Common myeloid progenitor, CD34-positive (primary cell): ENCODE measurements at regions of chr2 and their contacts with region 1.

Region 1: GRCh38 chr2:162301151-162301804 is 17.2 kb downstream of the IFIH1 start:
- DNase-seq: peak; percentile 66 to 85 (median 84)
- H3K4me3 ChIP-seq: no peak overlapping the region
- H3K27ac ChIP-seq: no peak overlapping the region
- H3K4me1 ChIP-seq: peaks cover 0 to 8% (median 6%) of the 10 kb centered on the region in 4 experiments
- H3K27me3 ChIP-seq: no peaks in the 10 kb centered on the region

Region 2: DNA sequence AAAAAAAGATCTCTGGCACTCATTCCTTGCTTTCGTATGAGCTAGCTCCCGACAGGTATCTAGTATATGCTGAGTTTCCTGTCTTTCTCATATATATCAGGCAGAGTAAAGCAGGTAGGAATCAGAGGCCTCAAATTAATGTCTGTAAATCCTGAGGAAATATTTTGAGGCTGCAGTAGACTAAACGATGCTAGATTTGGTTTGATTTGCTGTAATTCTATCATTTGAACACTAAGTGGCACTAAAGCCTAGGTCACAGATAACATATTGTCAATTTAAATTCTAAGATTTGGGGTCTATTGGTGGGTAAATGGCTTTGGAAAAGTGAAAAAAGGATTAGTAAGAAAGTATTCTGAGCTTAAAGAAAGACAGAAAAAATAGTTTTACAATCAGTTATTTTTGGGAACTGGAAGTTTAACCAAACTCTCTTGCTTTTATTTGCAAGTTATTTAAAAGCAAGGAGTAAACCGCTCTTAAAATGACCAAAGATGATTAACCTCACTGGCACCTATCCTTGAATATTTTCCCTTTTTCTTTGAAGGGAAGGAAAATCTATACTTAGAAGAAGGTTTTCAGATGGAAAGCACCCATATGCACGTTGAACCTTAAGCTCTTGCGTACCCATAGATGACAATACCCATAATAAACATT is 714.6 kb before region 1 on chr2:
- CTCF ChIA-PET with region 1: interaction called, 22 read pairs
- POLR2A ChIA-PET with region 1: no interaction called
- DNase-seq: peak; percentile 18 to 52 (median 39)
- H3K4me3 ChIP-seq: no peak overlapping the region
- H3K27ac ChIP-seq: no peak overlapping the region
- H3K4me1 ChIP-seq: no peaks in the 10 kb centered on the region
- H3K27me3 ChIP-seq: no peaks in the 10 kb centered on the region

Region 3: GRCh38 chr2:162153608-162154224 is 147.6 kb before region 1 on chr2:
- CTCF ChIA-PET with region 1: interaction called, 13 read pairs
- POLR2A ChIA-PET with region 1: no interaction called
- DNase-seq: peak; percentile 67 to 83 (median 77)
- H3K4me3 ChIP-seq: peak overlapping the region in 1 of 7 experiments; percentile 25
- H3K27ac ChIP-seq: no peak overlapping the region
- H3K4me1 ChIP-seq: no peaks in the 10 kb centered on the region
- H3K27me3 ChIP-seq: no peaks in the 10 kb centered on the region

Region 4: DNA sequence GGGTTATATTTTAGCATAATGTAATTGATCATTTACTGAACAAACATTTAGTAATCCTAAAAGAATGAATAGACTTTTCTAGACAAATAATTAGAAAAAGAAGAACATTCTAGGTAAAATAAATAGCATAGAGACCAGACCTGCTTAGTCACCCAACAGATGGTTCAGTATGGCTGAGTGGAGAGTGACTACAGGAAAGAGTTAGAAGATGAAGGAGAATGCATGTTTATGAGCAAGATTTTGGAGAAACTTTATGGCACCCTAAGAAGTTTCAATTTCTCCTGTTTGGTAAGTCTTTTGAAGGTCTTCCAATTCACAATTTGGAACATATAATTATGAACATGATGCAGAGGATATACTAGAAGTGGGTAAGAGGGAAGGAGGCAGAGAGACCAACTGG is 90.9 kb before region 1 on chr2:
- CTCF ChIA-PET with region 1: interaction called, 11 read pairs
- POLR2A ChIA-PET with region 1: no interaction called
- DNase-seq: peak in 2 of 3 donors; percentile 21 to 39
- H3K4me3 ChIP-seq: no peak overlapping the region
- H3K27ac ChIP-seq: no peak overlapping the region
- H3K4me1 ChIP-seq: peaks cover 0 to 12% (median 0%) of the 10 kb centered on the region in 4 experiments
- H3K27me3 ChIP-seq: no peaks in the 10 kb centered on the region

Region 5: GRCh38 chr2:162221064-162221463 is 80.2 kb before region 1 on chr2:
- CTCF ChIA-PET with region 1: interaction called, 112 read pairs
- POLR2A ChIA-PET with region 1: no interaction called
- DNase-seq: peak; percentile 39 to 58 (median 50)
- H3K4me3 ChIP-seq: no peak overlapping the region
- H3K27ac ChIP-seq: no peak overlapping the region
- H3K4me1 ChIP-seq: no peaks in the 10 kb centered on the region
- H3K27me3 ChIP-seq: no peaks in the 10 kb centered on the region

Region 6: GRCh38 chr2:162333968-162334367 is 32.7 kb after region 1 on chr2:
- CTCF ChIA-PET with region 1: interaction called, 26 read pairs
- POLR2A ChIA-PET with region 1: no interaction called
- DNase-seq: peak; percentile 31 to 42 (median 39)
- H3K4me3 ChIP-seq: no peak overlapping the region
- H3K27ac ChIP-seq: no peak overlapping the region
- H3K4me1 ChIP-seq: peaks cover 0 to 2% (median 0%) of the 10 kb centered on the region in 4 experiments
- H3K27me3 ChIP-seq: no peaks in the 10 kb centered on the region